ENCODE measurements at regions of chr7 and their contacts with region 1.

Region 1: GRCh38 chr7:142516038-142516501 is 233.2 kb upstream of the PRSS1 start:
- DNase-seq: peak in 1 of 2 experiments; percentile 56
- H3K4me3 ChIP-seq: no peak overlapping the region
- H3K27ac ChIP-seq: no peak overlapping the region
- H3K4me1 ChIP-seq: peaks cover 0 to 3% (median 0%) of the 10 kb centered on the region in 4 experiments; a peak in 1 of 7 replicates
- H3K27me3 ChIP-seq: no peaks in the 10 kb centered on the region
- CTCF ChIP-seq: peak; percentile 53 to 81 (median 75)
- EP300 ChIP-seq: no peak
- POLR2A ChIP-seq: no peak
- RAD21 ChIP-seq: peak; percentile 61 to 67

Region 2: GRCh38 chr7:142420559-142421362 is 95.3 kb before region 1 on chr7:
- CTCF ChIA-PET with region 1: interaction called, 10 read pairs
- POLR2A ChIA-PET with region 1: no interaction called
- DNase-seq: no peak
- H3K4me3 ChIP-seq: no peak overlapping the region
- H3K27ac ChIP-seq: no peak overlapping the region
- H3K4me1 ChIP-seq: peaks cover 0 to 5% (median 1%) of the 10 kb centered on the region in 4 experiments; a peak in 2 of 7 replicates
- H3K27me3 ChIP-seq: no peaks in the 10 kb centered on the region
- CTCF ChIP-seq: peak; percentile 28 to 52 (median 35)
- EP300 ChIP-seq: no peak
- POLR2A ChIP-seq: no peak
- RAD21 ChIP-seq: peak; percentile 56 to 62

Region 3: GRCh38 chr7:142568435-142569097 is 52.5 kb after region 1 on chr7:
- CTCF ChIA-PET with region 1: interaction called, 11 read pairs
- POLR2A ChIA-PET with region 1: no interaction called
- DNase-seq: no peak
- H3K4me3 ChIP-seq: no peak overlapping the region
- H3K27ac ChIP-seq: no peak overlapping the region
- H3K4me1 ChIP-seq: peaks cover 0 to 5% (median 0%) of the 10 kb centered on the region in 4 experiments; a peak in 2 of 7 replicates
- H3K27me3 ChIP-seq: no peaks in the 10 kb centered on the region
- CTCF ChIP-seq: no peak
- EP300 ChIP-seq: no peak
- POLR2A ChIP-seq: no peak
- RAD21 ChIP-seq: no peak

Measured in H1 (cell line).